ENCODE measurements at regions of chr19 and their contacts with region 1.

Region 1: GRCh38 chr19:11125994-11126685 is 29.4 kb downstream of the SPC24 start:
- DNase-seq: peak; percentile 87
- ATAC-seq: peak; percentile 76
- H3K4me3 Mint-ChIP-seq: no peak overlapping the region
- H3K27ac Mint-ChIP-seq: peak overlapping the region; percentile 65; the same call in 1 of the 2 replicates
- H3K4me1 Mint-ChIP-seq: no peaks in the 10 kb centered on the region
- H3K27me3 Mint-ChIP-seq: no peaks in the 10 kb centered on the region
- CTCF ChIP-seq: peak; percentile 82

Region 2: DNA sequence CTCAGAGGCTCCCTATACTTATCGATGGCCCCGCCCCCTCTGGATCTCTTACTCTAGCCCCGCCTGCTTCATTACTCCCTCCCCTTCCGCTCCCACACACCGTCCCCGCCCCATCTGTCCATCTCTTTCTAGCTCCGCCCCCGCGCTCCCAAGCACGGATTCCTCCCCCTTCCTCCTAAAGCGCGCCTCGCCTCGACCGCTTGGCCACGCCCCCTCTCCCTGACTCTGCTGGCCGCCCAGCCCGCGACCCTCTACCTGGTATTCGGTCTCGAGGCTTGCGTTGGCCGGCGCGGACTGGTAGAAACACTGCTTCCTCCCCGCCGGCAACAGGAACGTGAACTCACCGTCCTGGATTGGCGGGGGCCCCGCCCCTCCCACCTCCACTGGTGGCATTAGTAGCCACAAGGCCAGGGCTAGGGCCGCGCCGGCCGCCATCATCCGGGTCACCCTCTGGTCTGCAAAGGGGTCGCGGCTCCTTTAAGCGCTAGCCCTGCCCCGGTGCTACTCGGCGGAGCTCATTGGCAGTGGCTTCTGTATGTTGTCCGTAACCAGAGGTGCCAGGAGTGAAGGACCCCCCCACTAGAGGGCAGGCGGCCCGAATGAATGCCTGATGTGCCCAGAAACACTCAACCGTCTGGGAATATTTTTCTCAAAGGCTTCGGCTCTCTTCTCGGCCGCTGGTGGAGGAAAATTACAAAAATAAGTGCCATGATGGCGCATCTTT is 290.2 kb before region 1 on chr19 and contains the start of gene TMED1:
- CTCF ChIA-PET with region 1: no interaction called
- POLR2A ChIA-PET with region 1: no interaction called
- DNase-seq: peak; percentile 100
- ATAC-seq: peak; percentile 93
- H3K4me3 Mint-ChIP-seq: peak within 1 kb of the TSS; percentile 85
- H3K27ac Mint-ChIP-seq: peak within 1 kb of the TSS; percentile 100
- H3K4me1 Mint-ChIP-seq: peaks cover 13% of the 10 kb centered on the region
- H3K27me3 Mint-ChIP-seq: peaks cover 24% of the 10 kb centered on the region
- CTCF ChIP-seq: peak; percentile 36; the same call in 1 of the 2 replicates
- total RNA-seq, gene TMED1: 28.5 to 40.9 TPM (median 40.6 TPM) in 3 replicates

Region 3: DNA sequence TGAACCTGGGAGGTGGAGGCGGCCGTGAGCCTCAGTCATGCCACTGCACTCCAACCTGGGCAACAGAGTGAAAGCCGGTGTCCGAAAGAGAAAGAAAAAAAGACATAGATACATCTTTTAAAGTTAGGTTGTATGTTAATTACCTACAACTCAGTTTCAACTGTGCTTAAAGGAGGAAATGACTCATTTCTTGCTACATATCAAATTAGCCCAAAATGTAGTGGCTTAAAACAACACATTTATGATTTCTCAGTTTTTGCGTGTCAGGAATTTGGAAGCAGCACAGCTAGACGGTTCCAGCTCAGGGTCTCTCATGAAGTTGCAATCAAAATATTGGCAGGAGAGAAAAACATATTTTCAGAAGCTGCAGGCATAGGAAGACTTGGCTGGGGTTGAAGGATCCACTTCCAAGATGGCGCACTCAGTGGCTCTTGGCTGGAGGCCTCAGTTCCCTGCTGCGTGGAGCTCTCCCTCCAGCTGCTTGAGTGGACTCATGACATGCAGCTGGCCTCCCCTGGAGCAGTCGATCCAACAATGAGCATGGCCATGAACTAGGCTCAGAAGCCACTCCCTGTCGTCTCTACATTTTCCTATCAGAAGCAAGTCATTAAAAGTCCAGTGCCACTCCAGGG is 29.8 kb before region 1 on chr19:
- CTCF ChIA-PET with region 1: interaction called, 22 read pairs
- POLR2A ChIA-PET with region 1: no interaction called
- DNase-seq: no peak
- ATAC-seq: no peak
- H3K4me3 Mint-ChIP-seq: no peak overlapping the region
- H3K27ac Mint-ChIP-seq: peak overlapping the region; percentile 90
- H3K4me1 Mint-ChIP-seq: peaks cover 42% of the 10 kb centered on the region
- H3K27me3 Mint-ChIP-seq: no peaks in the 10 kb centered on the region
- CTCF ChIP-seq: no peak

Region 4: GRCh38 chr19:11137542-11138384 is 11.6 kb after region 1 on chr19:
- CTCF ChIA-PET with region 1: interaction called, 11 read pairs
- POLR2A ChIA-PET with region 1: no interaction called
- DNase-seq: peak; percentile 77
- ATAC-seq: peak; percentile 60
- H3K4me3 Mint-ChIP-seq: peak overlapping the region; percentile 77
- H3K27ac Mint-ChIP-seq: peak overlapping the region; percentile 82
- H3K4me1 Mint-ChIP-seq: peaks cover 16% of the 10 kb centered on the region
- H3K27me3 Mint-ChIP-seq: no peaks in the 10 kb centered on the region; the same call in 1 of the 2 replicates
- CTCF ChIP-seq: no peak

Region 5: DNA sequence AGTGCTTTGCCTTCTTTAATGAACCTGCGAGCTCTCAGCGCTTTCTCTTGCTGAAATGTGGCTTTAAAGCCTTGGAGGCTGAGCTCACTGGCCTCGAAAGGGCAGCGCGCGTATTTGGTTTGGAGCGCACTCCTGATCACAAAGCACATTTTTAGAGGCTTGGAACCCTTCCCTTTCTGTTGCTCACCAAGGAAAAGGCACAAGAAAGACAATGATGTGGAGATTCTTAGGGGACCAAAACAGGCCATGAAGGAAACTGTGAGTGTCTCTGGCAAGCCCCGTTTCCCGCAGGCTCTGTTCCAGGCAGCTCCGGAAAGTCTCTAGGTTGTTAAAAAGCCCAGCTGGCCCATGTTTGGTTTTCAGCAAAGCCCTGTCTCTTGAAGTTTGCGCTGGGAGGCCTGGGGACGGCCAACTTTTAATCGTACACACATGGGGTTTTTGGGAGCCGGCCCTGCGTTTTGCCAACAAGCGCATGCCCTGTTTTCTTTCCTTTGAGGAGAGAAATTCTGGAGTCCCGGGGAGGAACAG is 38.8 kb after region 1 on chr19:
- CTCF ChIA-PET with region 1: interaction called, 10 read pairs
- POLR2A ChIA-PET with region 1: no interaction called
- DNase-seq: no peak
- ATAC-seq: no peak
- H3K4me3 Mint-ChIP-seq: no peak overlapping the region
- H3K27ac Mint-ChIP-seq: peak overlapping the region; percentile 22
- H3K4me1 Mint-ChIP-seq: no peaks in the 10 kb centered on the region
- H3K27me3 Mint-ChIP-seq: no peaks in the 10 kb centered on the region; the same call in 1 of the 2 replicates
- CTCF ChIP-seq: no peak

Measured in WTC11 (cell line).